Endothelial cell of umbilical vein (primary cell): ENCODE measurements at regions of chr20 and their contacts with region 1.

Region 1: DNA sequence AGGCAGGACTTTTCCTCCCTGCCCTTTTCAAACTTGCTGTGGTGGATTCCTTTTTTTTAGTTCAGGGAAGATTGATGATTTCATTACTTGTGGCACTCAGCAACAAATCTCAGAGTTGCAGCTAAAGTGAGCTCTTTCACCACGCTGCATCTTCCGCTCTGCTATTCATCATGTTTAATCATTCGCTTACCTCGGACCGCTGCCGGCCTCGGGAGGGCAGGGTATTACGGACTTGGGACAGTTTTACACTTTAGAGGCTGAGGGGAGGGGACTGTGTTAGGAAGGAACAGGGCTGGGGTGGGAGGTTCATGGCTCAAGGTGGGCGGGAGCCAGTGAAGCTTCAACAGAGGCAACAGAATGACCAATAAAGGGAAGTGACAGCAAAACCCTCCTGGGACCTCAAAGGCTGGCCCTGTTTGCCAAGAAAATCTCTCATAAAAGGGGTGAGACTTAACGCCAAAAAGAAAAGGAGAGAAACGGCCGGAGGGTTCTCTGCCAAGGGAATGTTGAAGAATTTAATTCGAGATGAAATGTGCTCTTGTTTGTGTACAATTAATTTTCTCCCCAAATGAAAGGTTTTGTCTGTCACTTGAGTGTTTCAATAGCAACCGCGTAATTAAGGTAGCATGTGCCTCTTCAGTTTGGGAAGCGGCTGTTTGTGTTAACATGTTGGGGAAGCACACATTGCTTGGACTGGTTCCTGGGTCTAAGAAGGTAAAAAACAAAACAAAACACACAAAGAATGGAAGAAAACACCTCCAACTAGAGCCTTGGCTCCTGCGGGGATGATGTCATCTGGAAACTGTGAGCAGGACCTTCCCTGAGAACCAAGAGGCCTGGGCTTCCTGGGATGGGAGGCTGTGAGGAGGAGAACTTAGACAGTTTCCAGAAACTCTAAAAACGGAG is 72.5 kb upstream of the SULF2 start:
- DNase-seq: peak; percentile 38
- H3K4me3 ChIP-seq: no peak overlapping the region
- H3K27ac ChIP-seq: no peak overlapping the region
- H3K4me1 ChIP-seq: no peaks in the 10 kb centered on the region
- H3K27me3 ChIP-seq: peaks cover 0 to 9% of the 10 kb centered on the region in 2 experiments
- CTCF ChIP-seq: no peak
- POLR2A ChIP-seq: no peak

Region 2: GRCh38 chr20:47846579-47846978 is 11.2 kb before region 1 on chr20:
- CTCF ChIA-PET with region 1: no interaction called
- POLR2A ChIA-PET with region 1: no interaction called
- dilution Hi-C with region 1: no loop called
- intact Hi-C with region 1: no loop called
- DNase-seq: no peak
- H3K4me3 ChIP-seq: no peak overlapping the region
- H3K27ac ChIP-seq: no peak overlapping the region
- H3K4me1 ChIP-seq: peaks cover 4% of the 10 kb centered on the region
- H3K27me3 ChIP-seq: no peaks in the 10 kb centered on the region
- CTCF ChIP-seq: no peak
- POLR2A ChIP-seq: no peak

Region 3: GRCh38 chr20:48188657-48189551 is 331.1 kb after region 1 on chr20:
- CTCF ChIA-PET with region 1: interaction called, 13 read pairs
- POLR2A ChIA-PET with region 1: no interaction called
- dilution Hi-C with region 1: no loop called
- intact Hi-C with region 1: no loop called
- DNase-seq: peak; percentile 5
- H3K4me3 ChIP-seq: no peak overlapping the region
- H3K27ac ChIP-seq: no peak overlapping the region
- H3K4me1 ChIP-seq: no peaks in the 10 kb centered on the region
- H3K27me3 ChIP-seq: no peaks in the 10 kb centered on the region
- CTCF ChIP-seq: peak; percentile 11 to 21
- POLR2A ChIP-seq: no peak